ENCODE measurements at regions of chr22 and their contacts with region 1.

Region 1: DNA sequence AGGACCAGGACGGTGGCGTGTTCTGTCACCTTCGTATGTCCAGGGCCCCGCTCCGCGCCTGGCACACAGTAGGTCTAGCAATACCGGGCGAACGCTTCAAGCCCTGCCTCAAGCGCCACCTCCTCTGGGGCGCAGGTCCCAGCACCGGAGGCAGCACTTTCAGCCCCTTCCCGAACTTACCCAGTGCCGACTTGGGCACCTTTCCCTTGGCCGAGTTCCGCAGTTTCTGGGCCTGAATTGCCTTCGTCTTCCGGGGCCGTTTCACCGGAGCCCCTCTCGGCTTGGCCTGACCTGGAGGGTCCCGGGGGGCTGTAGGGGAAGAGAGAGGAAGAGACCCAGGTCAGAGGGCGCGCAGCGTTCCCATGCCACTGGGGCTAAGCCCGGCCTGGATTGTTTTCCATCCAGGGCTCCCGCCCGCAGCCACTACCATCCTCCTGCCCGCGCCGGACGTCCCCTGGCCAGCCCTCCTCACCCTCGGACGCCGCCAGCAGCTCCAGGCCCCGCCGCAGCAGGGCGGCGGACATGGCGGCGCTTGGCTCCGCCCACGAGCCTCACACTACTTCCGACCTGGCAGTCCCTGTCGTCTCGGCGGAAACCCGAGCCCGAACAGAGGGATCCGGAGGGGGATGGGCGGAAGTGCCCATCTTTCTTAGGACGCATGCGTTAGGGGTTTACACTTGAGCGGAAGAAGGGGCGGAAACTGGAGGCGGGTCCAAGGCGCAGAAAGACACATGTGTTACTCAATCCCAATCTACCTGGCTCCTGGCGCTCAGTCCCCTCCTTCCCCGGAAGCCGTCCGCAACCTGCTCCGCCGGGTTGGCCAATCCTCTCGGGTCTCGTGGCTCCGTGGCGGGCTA is at the start of gene RPS19BP1:
- DNase-seq: peak; percentile 100
- ATAC-seq: peak; percentile 89
- H3K4me3 Mint-ChIP-seq: peak within 1 kb of the TSS; percentile 98
- H3K27ac Mint-ChIP-seq: peak within 1 kb of the TSS; percentile 92
- H3K4me1 Mint-ChIP-seq: peaks cover 51% of the 10 kb centered on the region
- H3K27me3 Mint-ChIP-seq: no peaks in the 10 kb centered on the region
- total RNA-seq, gene RPS19BP1: 42.8 to 68.8 TPM

Region 2: DNA sequence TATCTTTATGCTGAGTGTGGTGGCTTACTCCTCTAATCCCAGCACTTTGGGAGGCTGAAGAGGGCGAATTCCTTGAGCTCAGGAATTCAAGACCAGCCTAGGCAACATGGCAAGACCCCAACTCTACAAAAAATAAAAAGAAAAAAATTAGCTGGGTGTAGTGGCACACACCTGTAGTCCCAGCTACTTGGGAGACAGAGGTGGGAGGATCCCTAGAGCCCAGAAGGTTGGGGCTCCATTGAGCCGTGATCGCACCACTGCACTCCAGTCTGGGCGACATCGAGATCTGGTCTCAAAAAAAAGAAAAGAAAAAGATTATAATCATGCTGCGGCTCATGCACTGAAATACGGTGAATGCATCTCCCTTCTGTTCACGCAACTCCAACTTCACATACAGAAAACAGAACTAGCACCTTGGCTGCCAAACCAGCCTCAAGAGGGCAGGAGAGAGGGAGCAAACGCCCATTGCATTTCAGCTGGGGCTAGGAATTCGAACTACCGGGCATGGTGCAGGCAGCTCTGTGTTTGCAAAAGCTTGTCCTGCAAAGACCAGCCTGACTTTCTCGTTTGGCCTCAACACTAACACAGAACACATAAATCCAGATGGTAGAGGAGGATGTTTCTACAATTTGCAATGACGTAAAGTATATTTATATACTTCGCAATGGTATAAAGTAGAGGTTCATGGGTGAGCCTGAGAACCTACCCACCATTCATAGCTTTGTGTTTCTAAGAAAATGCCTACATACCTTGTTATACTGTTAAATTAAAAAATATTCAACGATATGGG is 189.0 kb before region 1 on chr22:
- CTCF ChIA-PET with region 1: interaction called, 3 read pairs
- POLR2A ChIA-PET with region 1: interaction called, 3 read pairs
- intact Hi-C with region 1: loop called in 1 of 2 experiments (anchors 1 kb)
- DNase-seq: peak; percentile 71
- ATAC-seq: peak; percentile 87
- H3K4me3 Mint-ChIP-seq: no peak overlapping the region
- H3K27ac Mint-ChIP-seq: no peak overlapping the region
- H3K4me1 Mint-ChIP-seq: peaks cover 4% of the 10 kb centered on the region
- H3K27me3 Mint-ChIP-seq: peaks cover 2% of the 10 kb centered on the region

Region 3: GRCh38 chr22:39496131-39496838 is 36.2 kb before region 1 on chr22:
- CTCF ChIA-PET with region 1: interaction called, 100 read pairs
- POLR2A ChIA-PET with region 1: interaction called, 7 read pairs
- intact Hi-C with region 1: loop called (anchors 1 kb)
- DNase-seq: peak; percentile 85
- ATAC-seq: peak; percentile 89
- H3K4me3 Mint-ChIP-seq: no peak overlapping the region
- H3K27ac Mint-ChIP-seq: no peak overlapping the region
- H3K4me1 Mint-ChIP-seq: peaks cover 13% of the 10 kb centered on the region
- H3K27me3 Mint-ChIP-seq: no peaks in the 10 kb centered on the region

Region 4: DNA sequence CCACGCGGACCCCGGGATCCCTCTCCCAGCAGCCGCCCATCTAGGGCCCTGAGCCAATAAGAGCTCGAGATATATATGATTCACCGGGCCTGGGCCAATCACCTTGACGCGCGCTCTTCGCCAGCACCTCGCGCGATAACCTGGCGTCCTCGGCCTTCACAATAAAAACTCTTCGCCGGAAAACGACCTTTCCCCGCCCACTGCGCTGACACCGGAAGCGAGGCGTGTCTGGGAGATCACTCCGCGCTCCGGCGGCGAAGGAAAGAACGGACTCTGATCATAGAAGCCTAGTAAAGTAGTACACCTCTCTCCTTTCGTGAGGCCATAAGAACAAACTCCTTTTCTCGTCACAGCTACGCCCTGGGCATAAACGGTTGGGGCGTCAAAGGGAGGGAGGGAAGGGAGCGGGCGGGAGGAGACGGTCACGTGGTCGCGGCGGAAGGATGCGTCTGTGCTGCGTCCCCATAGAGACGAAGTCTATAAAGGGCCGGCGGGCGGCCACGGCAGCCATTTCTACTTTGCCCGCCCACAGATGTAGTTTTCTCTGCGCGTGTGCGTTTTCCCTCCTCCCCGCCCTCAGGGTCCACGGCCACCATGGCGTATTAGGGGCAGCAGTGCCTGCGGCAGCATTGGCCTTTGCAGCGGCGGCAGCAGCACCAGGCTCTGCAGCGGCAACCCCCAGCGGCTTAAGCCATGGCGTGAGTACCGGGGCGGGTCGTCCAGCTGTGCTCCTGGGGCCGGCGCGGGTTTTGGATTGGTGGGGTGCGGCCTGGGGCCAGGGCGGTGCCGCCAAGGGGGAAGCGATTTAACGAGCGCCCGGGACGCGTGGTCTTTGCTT is 12.2 kb before region 1 on chr22 and contains the start of gene ATF4:
- CTCF ChIA-PET with region 1: interaction called, 42 read pairs
- POLR2A ChIA-PET with region 1: interaction called, 27 read pairs
- intact Hi-C with region 1: loop called (anchors 1 kb)
- DNase-seq: peak; percentile 98
- ATAC-seq: peak; percentile 90
- H3K4me3 Mint-ChIP-seq: peak within 1 kb of the TSS; percentile 86
- H3K27ac Mint-ChIP-seq: peak within 1 kb of the TSS; percentile 99
- H3K4me1 Mint-ChIP-seq: peaks cover 67% of the 10 kb centered on the region
- H3K27me3 Mint-ChIP-seq: no peaks in the 10 kb centered on the region
- total RNA-seq, gene ATF4: 580 to 680 TPM

Region 5: DNA sequence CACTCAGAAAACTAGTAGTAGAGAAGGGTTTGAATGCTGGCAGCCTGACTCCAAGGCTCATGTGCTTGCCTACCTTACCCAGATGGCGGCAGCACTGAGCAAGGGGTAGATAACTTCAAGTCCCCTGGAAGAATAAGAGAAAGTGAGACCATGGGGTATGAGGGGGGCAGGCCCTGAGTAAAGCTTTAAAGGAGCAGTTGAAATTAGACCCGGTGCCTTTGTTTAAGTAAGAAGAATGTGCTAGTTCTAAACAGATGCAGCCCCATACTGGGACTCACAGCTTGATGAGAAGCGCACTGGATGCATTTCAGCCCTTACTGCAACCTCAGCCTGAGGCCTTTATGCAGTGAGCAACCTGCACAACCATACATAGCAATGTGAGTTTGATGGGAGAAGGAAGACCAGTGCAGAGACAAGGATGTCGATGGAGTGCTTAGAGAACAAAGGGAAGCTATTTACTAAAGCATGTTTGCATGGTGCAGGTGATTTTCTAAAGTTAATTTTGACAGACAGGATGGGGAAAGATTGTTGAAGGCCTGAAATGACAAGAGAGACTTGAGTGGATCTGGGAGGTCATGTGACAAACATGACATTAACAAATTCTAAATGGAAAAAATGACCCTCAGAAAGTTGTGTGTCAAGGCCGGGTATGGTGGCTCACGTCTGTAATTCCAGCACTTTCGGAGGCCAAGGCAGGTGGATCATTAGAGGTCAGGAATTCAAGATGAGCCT is 400.6 kb after region 1 on chr22:
- CTCF ChIA-PET with region 1: interaction called, 4 read pairs
- POLR2A ChIA-PET with region 1: no interaction called
- intact Hi-C with region 1: loop called in 1 of 2 experiments (anchors 10 kb)
- DNase-seq: peak; percentile 83
- ATAC-seq: peak; percentile 35
- H3K4me3 Mint-ChIP-seq: peak overlapping the region; percentile 69
- H3K27ac Mint-ChIP-seq: peak overlapping the region; percentile 92
- H3K4me1 Mint-ChIP-seq: peaks cover 54% of the 10 kb centered on the region
- H3K27me3 Mint-ChIP-seq: no peaks in the 10 kb centered on the region

Region 6: GRCh38 chr22:40036591-40037225 is 504.3 kb after region 1 on chr22:
- CTCF ChIA-PET with region 1: interaction called, 18 read pairs
- POLR2A ChIA-PET with region 1: interaction called, 3 read pairs
- intact Hi-C with region 1: loop called (anchors 1 to 2 kb)
- DNase-seq: peak; percentile 79
- ATAC-seq: peak; percentile 90
- H3K4me3 Mint-ChIP-seq: no peak overlapping the region
- H3K27ac Mint-ChIP-seq: no peak overlapping the region
- H3K4me1 Mint-ChIP-seq: no peaks in the 10 kb centered on the region
- H3K27me3 Mint-ChIP-seq: peaks cover 2% of the 10 kb centered on the region